IMR-90 (cell line): ENCODE measurements at regions of chr11 and their contacts with region 1.

Region 1: DNA sequence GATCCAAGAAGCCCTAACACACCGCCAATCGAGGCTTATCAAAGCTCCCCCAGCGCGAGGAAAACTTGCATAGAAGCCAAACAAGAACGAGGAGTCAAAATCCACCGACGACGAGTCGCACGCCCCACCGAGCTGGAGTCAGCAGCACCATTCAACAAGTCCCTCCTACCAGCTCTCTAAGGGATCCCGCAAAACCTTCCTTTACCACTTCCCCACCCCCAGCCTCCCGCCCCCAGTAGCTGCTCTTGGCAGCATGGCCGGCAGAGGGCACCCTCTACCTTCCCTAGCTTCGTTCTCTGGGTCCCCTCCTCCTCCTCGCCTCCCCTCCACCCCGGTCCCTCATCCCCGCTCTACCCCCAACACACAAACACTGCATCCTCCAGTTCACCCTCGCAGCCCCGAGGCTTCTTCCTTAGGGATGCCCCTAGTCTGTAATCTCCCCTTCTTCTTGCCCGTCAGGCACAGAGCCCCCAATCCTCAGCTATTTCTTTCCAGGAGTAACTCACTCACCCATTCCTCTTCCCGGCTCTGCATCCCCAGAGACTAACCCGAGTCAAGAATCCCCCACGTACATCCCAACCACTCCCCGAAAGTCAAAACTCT is 1.3 kb downstream of the BDNF start:
- DNase-seq: peak; percentile 92
- ATAC-seq: peak; percentile 53
- H3K4me3 ChIP-seq: peak overlapping the region; percentile 85
- H3K27ac ChIP-seq: peak overlapping the region; percentile 92
- H3K4me1 ChIP-seq: peaks cover 6% of the 10 kb centered on the region; the same call in 1 of the 2 replicates
- H3K27me3 ChIP-seq: no peaks in the 10 kb centered on the region
- CTCF ChIP-seq: peak; percentile 84
- POLR2A ChIP-seq: peak; percentile 82
- RAD21 ChIP-seq: peak; percentile 85

Region 2: DNA sequence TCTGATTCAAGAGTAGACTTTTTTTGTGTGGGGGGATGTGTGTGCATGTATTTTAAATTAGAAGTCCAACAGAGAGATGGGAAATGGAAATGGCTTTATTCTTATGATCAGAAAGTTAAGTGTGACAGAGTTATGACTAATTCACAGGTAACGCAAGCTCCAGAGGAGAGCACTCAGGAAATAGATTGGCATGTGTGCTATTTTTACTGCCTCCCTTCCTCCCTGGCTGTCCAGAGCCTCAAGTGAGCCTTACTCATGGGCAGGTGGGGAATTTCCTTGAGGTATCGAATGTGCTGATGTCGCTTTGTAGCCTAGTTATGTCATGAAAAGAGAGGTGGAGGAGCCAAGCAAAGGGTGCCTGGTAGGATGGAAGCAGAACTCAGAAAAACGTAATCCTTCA is 71.6 kb after region 1 on chr11:
- CTCF ChIA-PET with region 1: no interaction called
- POLR2A ChIA-PET with region 1: no interaction called
- dilution Hi-C with region 1: no loop called
- in situ Hi-C with region 1: no loop called
- intact Hi-C with region 1: no loop called
- DNase-seq: no peak
- ATAC-seq: no peak
- H3K4me3 ChIP-seq: no peak overlapping the region
- H3K27ac ChIP-seq: no peak overlapping the region
- H3K4me1 ChIP-seq: no peaks in the 10 kb centered on the region
- H3K27me3 ChIP-seq: peaks cover 2% of the 10 kb centered on the region; the same call in 1 of the 2 replicates
- CTCF ChIP-seq: no peak
- POLR2A ChIP-seq: no peak
- RAD21 ChIP-seq: no peak

Region 3: DNA sequence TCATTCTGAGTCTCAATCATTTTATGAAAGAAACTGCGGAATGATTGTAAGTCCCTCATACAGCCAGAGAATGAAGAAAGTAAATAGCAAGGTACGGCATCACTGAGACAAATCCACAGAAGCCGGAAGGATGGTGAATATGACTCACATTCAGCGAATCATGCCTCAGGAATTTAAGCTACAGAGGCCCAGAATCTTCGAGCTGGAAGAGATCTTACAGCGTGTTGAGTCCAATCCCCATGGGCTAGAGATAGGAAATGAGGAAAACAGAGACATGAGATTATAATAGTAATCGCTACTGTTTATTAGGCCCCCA is 235.8 kb after region 1 on chr11:
- CTCF ChIA-PET with region 1: no interaction called
- POLR2A ChIA-PET with region 1: interaction called, 3 read pairs
- dilution Hi-C with region 1: no loop called
- in situ Hi-C with region 1: no loop called
- intact Hi-C with region 1: loop called (anchors 2 kb)
- DNase-seq: peak; percentile 98
- ATAC-seq: peak; percentile 69
- H3K4me3 ChIP-seq: peak overlapping the region; percentile 11; the same call in 1 of the 2 replicates
- H3K27ac ChIP-seq: peak overlapping the region; percentile 90
- H3K4me1 ChIP-seq: peaks cover 6% of the 10 kb centered on the region
- H3K27me3 ChIP-seq: no peaks in the 10 kb centered on the region
- CTCF ChIP-seq: no peak
- POLR2A ChIP-seq: no peak; the same call in none of the 2 replicates
- RAD21 ChIP-seq: peak; percentile 29; the same call in 1 of the 2 replicates

Region 4: DNA sequence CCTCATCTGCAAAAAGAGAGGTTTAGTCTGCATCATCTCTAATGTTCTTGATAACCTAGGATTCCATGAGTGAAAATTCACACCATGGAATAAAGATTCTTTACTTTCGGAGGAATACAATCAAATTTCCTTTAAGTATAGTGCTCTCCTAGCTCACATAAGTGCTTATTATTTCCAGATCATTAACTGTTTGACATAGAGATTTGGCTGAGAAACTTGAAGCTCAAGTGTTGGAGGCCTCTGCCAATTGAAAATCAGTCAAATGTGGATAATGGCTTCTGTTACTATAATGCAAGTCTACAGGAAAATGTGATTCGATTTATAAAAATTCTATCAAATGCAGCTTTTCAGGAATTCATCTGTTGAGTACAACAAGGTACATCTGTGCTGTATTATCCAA is 264.4 kb after region 1 on chr11:
- CTCF ChIA-PET with region 1: no interaction called
- POLR2A ChIA-PET with region 1: no interaction called
- dilution Hi-C with region 1: no loop called
- in situ Hi-C with region 1: no loop called
- intact Hi-C with region 1: no loop called
- DNase-seq: no peak
- ATAC-seq: no peak
- H3K4me3 ChIP-seq: no peak overlapping the region
- H3K27ac ChIP-seq: no peak overlapping the region
- H3K4me1 ChIP-seq: no peaks in the 10 kb centered on the region
- H3K27me3 ChIP-seq: no peaks in the 10 kb centered on the region
- CTCF ChIP-seq: no peak
- POLR2A ChIP-seq: no peak
- RAD21 ChIP-seq: no peak

Region 5: DNA sequence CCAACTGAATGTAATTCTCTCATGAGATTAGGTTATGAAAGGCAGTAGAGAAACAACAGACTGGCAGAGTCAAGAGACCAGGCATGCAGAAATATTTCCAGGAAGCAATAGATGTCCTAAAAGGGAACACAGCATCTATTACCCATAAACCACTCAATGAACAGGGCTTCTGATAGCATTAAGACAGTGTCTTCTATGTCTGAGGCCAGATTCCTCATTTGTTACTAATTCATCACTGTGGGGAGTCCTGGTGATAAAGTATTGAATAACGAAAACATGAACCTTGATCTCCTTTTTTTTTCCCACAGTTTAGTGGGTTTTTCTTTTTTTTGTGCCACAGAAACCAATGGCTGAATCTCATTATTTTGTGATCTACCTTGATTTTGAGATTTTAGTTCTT is 748.3 kb after region 1 on chr11:
- CTCF ChIA-PET with region 1: no interaction called
- POLR2A ChIA-PET with region 1: interaction called, 16 read pairs
- dilution Hi-C with region 1: no loop called
- in situ Hi-C with region 1: no loop called
- intact Hi-C with region 1: no loop called
- DNase-seq: peak; percentile 61
- ATAC-seq: peak; percentile 62; the same call in 1 of the 2 replicates
- H3K4me3 ChIP-seq: no peak overlapping the region
- H3K27ac ChIP-seq: no peak overlapping the region
- H3K4me1 ChIP-seq: peaks cover 3% of the 10 kb centered on the region
- H3K27me3 ChIP-seq: no peaks in the 10 kb centered on the region
- CTCF ChIP-seq: no peak
- POLR2A ChIP-seq: no peak
- RAD21 ChIP-seq: no peak

Region 6: GRCh38 chr11:28566339-28567089 is 867.5 kb after region 1 on chr11:
- CTCF ChIA-PET with region 1: no interaction called
- POLR2A ChIA-PET with region 1: interaction called, 3 read pairs
- dilution Hi-C with region 1: no loop called
- in situ Hi-C with region 1: no loop called
- intact Hi-C with region 1: loop called (anchors 5 kb)
- DNase-seq: peak; percentile 100
- ATAC-seq: peak; percentile 98
- H3K4me3 ChIP-seq: peak overlapping the region; percentile 3; the same call in 1 of the 2 replicates
- H3K27ac ChIP-seq: peak overlapping the region; percentile 78
- H3K4me1 ChIP-seq: peaks cover 5% of the 10 kb centered on the region
- H3K27me3 ChIP-seq: no peaks in the 10 kb centered on the region
- CTCF ChIP-seq: no peak
- POLR2A ChIP-seq: peak; percentile 13; the same call in 1 of the 2 replicates
- RAD21 ChIP-seq: peak; percentile 40

Region 7: GRCh38 chr11:28743061-28743550 is 1044.1 kb after region 1 on chr11:
- CTCF ChIA-PET with region 1: no interaction called
- POLR2A ChIA-PET with region 1: no interaction called
- dilution Hi-C with region 1: no loop called
- in situ Hi-C with region 1: no loop called
- intact Hi-C with region 1: loop called (anchors 5 kb)
- DNase-seq: peak; percentile 69
- ATAC-seq: peak; percentile 83
- H3K4me3 ChIP-seq: no peak overlapping the region
- H3K27ac ChIP-seq: peak overlapping the region; percentile 81
- H3K4me1 ChIP-seq: peaks cover 14% of the 10 kb centered on the region
- H3K27me3 ChIP-seq: no peaks in the 10 kb centered on the region
- CTCF ChIP-seq: no peak
- POLR2A ChIP-seq: no peak
- RAD21 ChIP-seq: no peak

Region 8: DNA sequence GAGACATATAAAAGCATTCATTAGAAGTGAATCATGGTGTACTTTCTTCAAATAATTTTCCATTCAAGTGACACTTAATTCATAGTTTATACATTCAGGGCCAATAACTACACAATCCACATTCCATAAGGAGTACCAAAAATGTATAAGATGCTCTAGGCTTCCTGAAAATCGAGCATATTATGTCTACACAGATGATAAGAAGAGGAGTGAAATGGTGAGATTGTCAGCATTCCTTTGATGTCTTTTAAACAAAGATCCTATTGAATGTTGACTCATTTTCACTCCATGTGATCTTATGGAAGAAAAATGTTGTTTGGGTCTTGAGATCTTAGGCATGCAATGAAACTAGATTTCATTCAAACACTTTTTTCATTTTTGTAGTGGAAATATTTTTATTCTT is 1474.7 kb after region 1 on chr11:
- CTCF ChIA-PET with region 1: no interaction called
- POLR2A ChIA-PET with region 1: no interaction called
- dilution Hi-C with region 1: no loop called
- in situ Hi-C with region 1: loop called (anchors 25 kb)
- intact Hi-C with region 1: loop called (anchors 2 kb)
- DNase-seq: peak; percentile 99
- ATAC-seq: peak; percentile 86
- H3K4me3 ChIP-seq: no peak overlapping the region
- H3K27ac ChIP-seq: peak overlapping the region; percentile 99; the same call in 1 of the 2 replicates
- H3K4me1 ChIP-seq: peaks cover 6% of the 10 kb centered on the region
- H3K27me3 ChIP-seq: no peaks in the 10 kb centered on the region
- CTCF ChIP-seq: no peak
- POLR2A ChIP-seq: no peak
- RAD21 ChIP-seq: peak; percentile 19; the same call in 1 of the 2 replicates